Activated B cell treated with CpG ODN at 0.5 μM for 24 hours (primary cell): ENCODE measurements at regions of chrX and their contacts with region 1.

Region 1: GRCh38 chrX:13658602-13659001 is 5.7 kb downstream of the TCEANC start:
- DNase-seq: no peak
- ATAC-seq: peak; percentile 37
- H3K4me3 Mint-ChIP-seq: no peak overlapping the region
- H3K27ac Mint-ChIP-seq: peak overlapping the region; percentile 46
- H3K4me1 Mint-ChIP-seq: peaks cover 14% of the 10 kb centered on the region
- H3K27me3 Mint-ChIP-seq: no peaks in the 10 kb centered on the region
- CTCF ChIP-seq: no peak

Region 2: GRCh38 chrX:13851996-13852695 is 193.5 kb after region 1 on chrX:
- CTCF ChIA-PET with region 1: no interaction called
- POLR2A ChIA-PET with region 1: no interaction called
- intact Hi-C with region 1: loop called (anchors 2 kb)
- DNase-seq: no peak
- ATAC-seq: peak; percentile 61
- H3K4me3 Mint-ChIP-seq: no peak overlapping the region
- H3K27ac Mint-ChIP-seq: no peak overlapping the region
- H3K4me1 Mint-ChIP-seq: peaks cover 3% of the 10 kb centered on the region
- H3K27me3 Mint-ChIP-seq: no peaks in the 10 kb centered on the region
- CTCF ChIP-seq: no peak